GM12878 (cell line): ENCODE measurements at regions of chr10 and their contacts with region 1.

Region 1: DNA sequence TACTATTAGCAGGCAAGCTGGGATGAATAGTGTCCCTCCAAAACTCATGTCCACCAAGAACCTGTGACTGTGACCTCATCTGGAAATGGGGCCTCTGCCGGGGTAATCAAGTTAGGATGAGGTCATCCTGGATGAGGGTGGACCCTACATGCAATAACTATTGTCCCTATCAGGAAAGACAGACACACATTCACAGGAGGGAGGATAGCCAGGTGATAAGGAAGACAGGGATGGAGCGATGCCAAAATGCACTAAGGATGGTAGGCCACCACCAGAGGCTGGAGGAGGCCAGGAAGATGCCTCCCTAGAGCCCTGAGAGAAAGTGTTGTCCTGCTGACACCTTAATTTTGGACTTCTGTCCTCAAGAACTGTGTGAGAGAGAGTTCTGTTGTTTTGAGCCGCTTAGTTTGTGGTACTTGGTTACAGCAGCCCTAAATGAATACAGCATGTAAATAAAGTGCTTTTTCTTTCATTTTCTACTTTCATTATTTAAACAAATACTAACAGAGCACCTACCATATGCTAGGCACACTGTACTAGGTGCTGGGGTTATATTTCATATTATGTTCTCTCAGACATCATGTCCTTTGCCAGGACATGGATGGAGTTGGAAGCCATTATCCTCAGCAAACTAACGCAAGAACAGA is 111.9 kb downstream of the USP6NL start:
- DNase-seq: no peak
- ATAC-seq: peak; percentile 47; the same call in 2 of the 3 replicates
- H3K4me3 ChIP-seq: no peak overlapping the region
- H3K27ac ChIP-seq: no peak overlapping the region
- H3K4me1 ChIP-seq: peaks cover 7% of the 10 kb centered on the region; the same call in 1 of the 2 replicates
- H3K27me3 ChIP-seq: no peaks in the 10 kb centered on the region
- CTCF ChIP-seq: no peak
- EP300 ChIP-seq: no peak
- POLR2A ChIP-seq: no peak
- RAD21 ChIP-seq: no peak

Region 2: GRCh38 chr10:11272915-11273389 is 226.6 kb before region 1 on chr10:
- CTCF ChIA-PET with region 1: no interaction called
- POLR2A ChIA-PET with region 1: no interaction called
- RAD21 ChIA-PET with region 1: no interaction called
- SMC1A ChIA-PET with region 1: no interaction called
- in situ Hi-C with region 1: no loop called
- intact Hi-C with region 1: no loop called
- DNase-seq: peak; percentile 64
- ATAC-seq: peak; percentile 58
- H3K4me3 ChIP-seq: no peak overlapping the region
- H3K27ac ChIP-seq: peak overlapping the region; percentile 75
- H3K4me1 ChIP-seq: peaks cover 40% of the 10 kb centered on the region
- H3K27me3 ChIP-seq: no peaks in the 10 kb centered on the region
- CTCF ChIP-seq: no peak
- EP300 ChIP-seq: peak; percentile 72 to 85
- POLR2A ChIP-seq: no peak; the same call in 1 of the 2 replicates
- RAD21 ChIP-seq: no peak

Region 3: GRCh38 chr10:11397980-11398580 is 101.5 kb before region 1 on chr10:
- CTCF ChIA-PET with region 1: no interaction called
- POLR2A ChIA-PET with region 1: no interaction called
- RAD21 ChIA-PET with region 1: no interaction called
- SMC1A ChIA-PET with region 1: no interaction called
- in situ Hi-C with region 1: no loop called
- intact Hi-C with region 1: no loop called
- DNase-seq: no peak
- ATAC-seq: no peak
- H3K4me3 ChIP-seq: no peak overlapping the region
- H3K27ac ChIP-seq: no peak overlapping the region
- H3K4me1 ChIP-seq: no peaks in the 10 kb centered on the region
- H3K27me3 ChIP-seq: no peaks in the 10 kb centered on the region; a peak in 1 of 4 replicates
- CTCF ChIP-seq: no peak
- EP300 ChIP-seq: no peak
- POLR2A ChIP-seq: no peak
- RAD21 ChIP-seq: no peak

Region 4: DNA sequence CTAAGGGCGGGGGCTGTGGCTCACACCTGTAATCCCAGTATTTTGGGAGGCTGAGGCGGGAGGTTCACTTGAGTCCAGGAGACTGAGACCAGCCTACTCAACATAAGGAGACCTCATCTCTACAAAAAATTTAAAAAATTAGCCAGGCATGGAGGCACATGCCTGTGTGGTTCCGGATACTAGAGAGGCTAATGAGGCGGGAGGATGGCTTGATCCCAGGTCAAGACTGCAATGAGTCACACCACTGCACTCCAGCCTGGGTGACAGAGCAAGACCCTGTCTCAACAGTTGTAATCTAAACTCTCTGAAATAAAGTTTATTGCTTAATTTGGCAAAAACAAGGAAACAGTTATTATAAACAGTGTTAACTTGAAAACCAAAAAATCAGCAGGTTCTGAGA is 11.4 kb before region 1 on chr10:
- CTCF ChIA-PET with region 1: interaction called, 13 read pairs
- POLR2A ChIA-PET with region 1: interaction called, 10 read pairs
- RAD21 ChIA-PET with region 1: no interaction called
- SMC1A ChIA-PET with region 1: interaction called, 7 read pairs
- in situ Hi-C with region 1: no loop called
- intact Hi-C with region 1: no loop called
- DNase-seq: no peak
- ATAC-seq: no peak
- H3K4me3 ChIP-seq: no peak overlapping the region
- H3K27ac ChIP-seq: no peak overlapping the region
- H3K4me1 ChIP-seq: peaks cover under 1% of the 10 kb centered on the region; the same call in 1 of the 2 replicates
- H3K27me3 ChIP-seq: no peaks in the 10 kb centered on the region
- CTCF ChIP-seq: no peak
- EP300 ChIP-seq: no peak
- POLR2A ChIP-seq: no peak
- RAD21 ChIP-seq: no peak

Region 5: GRCh38 chr10:11625019-11625735 is 125.6 kb after region 1 on chr10:
- CTCF ChIA-PET with region 1: no interaction called
- POLR2A ChIA-PET with region 1: no interaction called
- RAD21 ChIA-PET with region 1: no interaction called
- SMC1A ChIA-PET with region 1: no interaction called
- in situ Hi-C with region 1: no loop called
- intact Hi-C with region 1: no loop called
- DNase-seq: peak; percentile 56
- ATAC-seq: peak; percentile 93
- H3K4me3 ChIP-seq: 0 out of 2 replicates have a peak overlapping the region, but pooled peaks have one; percentile 41
- H3K27ac ChIP-seq: peak overlapping the region; percentile 32; the same call in 1 of the 2 replicates
- H3K4me1 ChIP-seq: peaks cover 20% of the 10 kb centered on the region
- H3K27me3 ChIP-seq: no peaks in the 10 kb centered on the region
- CTCF ChIP-seq: no peak
- EP300 ChIP-seq: no peak
- POLR2A ChIP-seq: no peak
- RAD21 ChIP-seq: no peak

Region 6: GRCh38 chr10:11810313-11810766 is 310.8 kb after region 1 on chr10:
- CTCF ChIA-PET with region 1: no interaction called
- POLR2A ChIA-PET with region 1: no interaction called
- RAD21 ChIA-PET with region 1: no interaction called
- SMC1A ChIA-PET with region 1: no interaction called
- in situ Hi-C with region 1: no loop called
- intact Hi-C with region 1: no loop called
- DNase-seq: no peak
- ATAC-seq: no peak
- H3K4me3 ChIP-seq: no peak overlapping the region
- H3K27ac ChIP-seq: no peak overlapping the region
- H3K4me1 ChIP-seq: no peaks in the 10 kb centered on the region
- H3K27me3 ChIP-seq: peaks cover 0 to 1% of the 10 kb centered on the region in 2 experiments; a peak in 2 of 4 replicates
- CTCF ChIP-seq: no peak
- EP300 ChIP-seq: no peak
- POLR2A ChIP-seq: no peak
- RAD21 ChIP-seq: no peak